Activated CD4-positive, alpha-beta memory T cell treated with anti-CD3 and anti-CD28 coated beads, Interleukin-2, amount 10 ng/mL, durations not matched to agents 7 days and 5 days (primary cell): ENCODE measurements at regions of chr2 and their contacts with region 1.

Region 1: GRCh38 chr2:86201671-86202335 is 2.5 kb downstream of the MRPL35 start:
- DNase-seq: no peak
- H3K4me3 Mint-ChIP-seq: peak overlapping the region; percentile 18
- H3K27ac Mint-ChIP-seq: no peak overlapping the region
- H3K4me1 Mint-ChIP-seq: peaks cover 40% of the 10 kb centered on the region
- H3K27me3 Mint-ChIP-seq: no peaks in the 10 kb centered on the region

Region 2: GRCh38 chr2:86118133-86118532 is 83.7 kb before region 1 on chr2:
- CTCF ChIA-PET with region 1: no interaction called
- POLR2A ChIA-PET with region 1: no interaction called
- DNase-seq: no peak
- H3K4me3 Mint-ChIP-seq: no peak overlapping the region
- H3K27ac Mint-ChIP-seq: no peak overlapping the region
- H3K4me1 Mint-ChIP-seq: no peaks in the 10 kb centered on the region
- H3K27me3 Mint-ChIP-seq: no peaks in the 10 kb centered on the region

Region 3: GRCh38 chr2:86160156-86160952 is 41.4 kb before region 1 on chr2:
- CTCF ChIA-PET with region 1: no interaction called
- POLR2A ChIA-PET with region 1: no interaction called
- DNase-seq: no peak
- H3K4me3 Mint-ChIP-seq: no peak overlapping the region
- H3K27ac Mint-ChIP-seq: no peak overlapping the region
- H3K4me1 Mint-ChIP-seq: no peaks in the 10 kb centered on the region
- H3K27me3 Mint-ChIP-seq: no peaks in the 10 kb centered on the region

Region 4: GRCh38 chr2:86185517-86186212 is 16.1 kb before region 1 on chr2:
- CTCF ChIA-PET with region 1: interaction called, 3 read pairs
- POLR2A ChIA-PET with region 1: interaction called, 93 read pairs
- DNase-seq: no peak
- H3K4me3 Mint-ChIP-seq: peak overlapping the region; percentile 61
- H3K27ac Mint-ChIP-seq: peak overlapping the region; percentile 94
- H3K4me1 Mint-ChIP-seq: peaks cover 80% of the 10 kb centered on the region
- H3K27me3 Mint-ChIP-seq: no peaks in the 10 kb centered on the region

Region 5: GRCh38 chr2:86221066-86221684 is 19.4 kb after region 1 on chr2:
- CTCF ChIA-PET with region 1: interaction called, 18 read pairs
- POLR2A ChIA-PET with region 1: interaction called, 5 read pairs
- DNase-seq: peak; percentile 72
- H3K4me3 Mint-ChIP-seq: no peak overlapping the region
- H3K27ac Mint-ChIP-seq: no peak overlapping the region
- H3K4me1 Mint-ChIP-seq: peaks cover 46% of the 10 kb centered on the region
- H3K27me3 Mint-ChIP-seq: no peaks in the 10 kb centered on the region

Region 6: DNA sequence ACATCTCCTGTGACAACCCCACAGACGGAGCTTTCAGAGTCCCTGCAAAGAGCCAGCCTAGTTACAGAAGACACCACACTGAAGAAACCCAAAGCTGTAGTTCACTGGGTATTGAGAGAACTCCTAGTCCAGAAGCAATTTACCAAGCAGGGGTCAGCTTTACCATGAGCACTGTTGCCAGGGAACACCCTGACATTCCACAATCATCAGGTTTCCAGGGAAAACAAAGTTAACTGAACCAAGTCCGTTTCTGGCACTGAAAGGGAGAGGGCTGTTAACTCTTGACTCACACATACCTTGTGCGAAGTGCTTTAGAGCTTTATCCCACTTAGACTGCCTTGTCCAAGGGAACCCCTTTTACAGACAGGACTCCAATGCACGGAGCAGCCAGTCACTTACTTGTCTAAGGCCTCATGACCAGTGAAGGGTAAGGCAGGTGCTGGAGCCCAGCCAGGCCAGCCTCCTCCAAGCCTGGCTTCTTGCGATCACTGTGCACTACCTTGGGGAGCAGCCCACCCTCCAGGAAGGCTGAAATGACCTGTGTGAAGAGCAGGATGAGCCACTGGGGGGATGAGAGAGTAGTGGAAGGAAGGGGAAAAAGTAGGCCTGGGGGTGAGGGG is 81.7 kb after region 1 on chr2:
- CTCF ChIA-PET with region 1: no interaction called
- POLR2A ChIA-PET with region 1: no interaction called
- DNase-seq: no peak
- H3K4me3 Mint-ChIP-seq: no peak overlapping the region
- H3K27ac Mint-ChIP-seq: no peak overlapping the region
- H3K4me1 Mint-ChIP-seq: peaks cover 2% of the 10 kb centered on the region
- H3K27me3 Mint-ChIP-seq: peaks cover 30% of the 10 kb centered on the region